PC-9 (cell line): ENCODE measurements at regions of chr1 and their contacts with region 1.

Region 1: GRCh38 chr1:201348211-201348566 is 29.3 kb downstream of the TNNT2 start:
- DNase-seq: peak; percentile 25 to 69
- H3K4me3 ChIP-seq: no peak overlapping the region
- H3K27ac ChIP-seq: no peak overlapping the region
- H3K4me1 ChIP-seq: peaks cover 17% of the 10 kb centered on the region
- H3K27me3 ChIP-seq: no peaks in the 10 kb centered on the region
- CTCF ChIP-seq: peak; percentile 82

Region 2: DNA sequence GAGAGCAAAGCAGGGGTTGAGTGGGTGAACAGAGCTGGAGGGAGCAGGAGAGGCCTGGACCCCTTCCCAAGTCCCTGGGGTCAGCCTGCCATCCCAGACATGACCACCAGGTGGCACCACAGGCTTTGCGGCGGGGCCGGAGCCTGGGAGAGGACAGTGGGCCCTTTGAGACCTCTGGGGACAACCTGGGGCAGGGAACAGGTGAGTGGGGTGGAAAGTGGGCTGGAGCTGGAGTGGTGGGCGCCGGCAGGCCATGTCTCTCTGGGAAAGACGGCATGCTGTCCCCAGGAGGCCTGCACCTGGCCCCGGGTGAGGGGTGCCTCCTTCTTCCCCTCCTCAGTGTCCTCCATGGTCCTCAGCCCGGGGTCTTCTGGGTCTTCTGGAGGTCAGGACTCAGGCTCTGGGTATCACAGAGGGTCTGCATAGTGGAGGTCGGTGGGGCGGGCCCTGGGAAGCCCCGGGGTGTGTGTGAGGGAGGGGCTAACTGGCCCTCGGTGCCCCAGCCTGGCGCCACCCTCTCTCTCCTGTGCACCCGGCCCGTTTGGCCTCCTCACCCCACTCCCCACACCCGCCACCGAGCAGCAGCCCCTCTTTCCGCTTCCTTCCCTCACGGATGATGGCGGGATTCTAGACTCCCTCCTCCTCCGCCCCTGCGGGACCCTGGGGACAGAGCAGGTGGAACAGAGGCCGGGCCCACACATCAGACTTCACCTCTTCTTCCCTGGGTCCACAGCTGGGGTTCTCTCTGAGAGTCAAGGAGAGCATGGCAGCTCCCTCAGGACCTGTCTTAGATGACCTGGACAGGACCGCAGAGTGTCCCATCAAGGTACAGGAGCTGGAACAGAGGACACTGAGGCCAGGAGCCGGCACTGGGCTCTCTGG is 93.3 kb before region 1 on chr1:
- CTCF ChIA-PET with region 1: interaction called, 18 read pairs
- POLR2A ChIA-PET with region 1: no interaction called
- intact Hi-C with region 1: loop called (anchors 1 kb)
- DNase-seq: peak in 1 of 2 experiments; percentile 77
- H3K4me3 ChIP-seq: no peak overlapping the region
- H3K27ac ChIP-seq: no peak overlapping the region
- H3K4me1 ChIP-seq: peaks cover 8% of the 10 kb centered on the region; the same call in 1 of the 2 replicates
- H3K27me3 ChIP-seq: no peaks in the 10 kb centered on the region
- CTCF ChIP-seq: peak; percentile 99

Region 3: GRCh38 chr1:201288766-201289165 is 59.4 kb before region 1 on chr1:
- CTCF ChIA-PET with region 1: interaction called, 13 read pairs
- POLR2A ChIA-PET with region 1: interaction called, 10 read pairs
- intact Hi-C with region 1: no loop called
- DNase-seq: no peak
- H3K4me3 ChIP-seq: no peak overlapping the region
- H3K27ac ChIP-seq: no peak overlapping the region
- H3K4me1 ChIP-seq: peaks cover 37% of the 10 kb centered on the region
- H3K27me3 ChIP-seq: no peaks in the 10 kb centered on the region
- CTCF ChIP-seq: no peak

Region 4: DNA sequence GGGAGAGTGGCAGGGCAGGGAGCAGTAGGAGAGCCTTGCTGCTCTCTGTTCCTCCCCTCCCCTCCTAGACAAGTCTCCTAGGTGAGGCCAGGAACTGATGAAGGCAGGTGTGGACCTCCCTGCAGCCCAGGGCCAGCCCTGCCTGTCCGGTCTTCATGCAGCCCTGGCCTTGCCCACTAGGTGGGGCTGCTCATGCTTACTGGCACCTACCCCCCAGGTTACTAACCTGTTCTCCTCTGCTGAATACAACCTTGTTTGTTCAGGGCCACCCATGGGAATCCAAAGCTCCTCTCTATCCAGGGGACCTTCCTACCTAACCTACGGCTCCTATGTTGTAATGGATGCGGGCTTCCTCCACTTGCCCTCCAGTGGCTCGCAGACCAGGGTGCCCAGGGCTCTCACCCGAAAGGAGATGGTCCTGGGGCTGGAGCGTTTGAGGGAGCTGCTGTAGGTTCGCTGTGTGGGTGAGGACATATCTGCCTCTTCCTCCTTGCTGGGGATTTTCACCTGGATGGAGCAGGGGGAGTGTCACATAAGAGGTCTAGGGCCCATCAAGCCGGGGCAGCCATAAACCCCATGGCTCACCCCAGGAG is 37.2 kb after region 1 on chr1:
- CTCF ChIA-PET with region 1: no interaction called
- POLR2A ChIA-PET with region 1: no interaction called
- intact Hi-C with region 1: loop called (anchors 1 kb)
- DNase-seq: peak; percentile 62 to 82
- H3K4me3 ChIP-seq: no peak overlapping the region
- H3K27ac ChIP-seq: no peak overlapping the region
- H3K4me1 ChIP-seq: peaks cover 14% of the 10 kb centered on the region; the same call in 1 of the 2 replicates
- H3K27me3 ChIP-seq: no peaks in the 10 kb centered on the region
- CTCF ChIP-seq: peak; percentile 87

Region 5: GRCh38 chr1:201481761-201482493 is 133.7 kb after region 1 on chr1:
- CTCF ChIA-PET with region 1: interaction called, 7 read pairs
- POLR2A ChIA-PET with region 1: no interaction called
- intact Hi-C with region 1: loop called (anchors 1 kb)
- DNase-seq: peak; percentile 52 to 86
- H3K4me3 ChIP-seq: no peak overlapping the region
- H3K27ac ChIP-seq: no peak overlapping the region
- H3K4me1 ChIP-seq: peaks cover 30% of the 10 kb centered on the region
- H3K27me3 ChIP-seq: no peaks in the 10 kb centered on the region
- CTCF ChIP-seq: peak; percentile 86

Region 6: DNA sequence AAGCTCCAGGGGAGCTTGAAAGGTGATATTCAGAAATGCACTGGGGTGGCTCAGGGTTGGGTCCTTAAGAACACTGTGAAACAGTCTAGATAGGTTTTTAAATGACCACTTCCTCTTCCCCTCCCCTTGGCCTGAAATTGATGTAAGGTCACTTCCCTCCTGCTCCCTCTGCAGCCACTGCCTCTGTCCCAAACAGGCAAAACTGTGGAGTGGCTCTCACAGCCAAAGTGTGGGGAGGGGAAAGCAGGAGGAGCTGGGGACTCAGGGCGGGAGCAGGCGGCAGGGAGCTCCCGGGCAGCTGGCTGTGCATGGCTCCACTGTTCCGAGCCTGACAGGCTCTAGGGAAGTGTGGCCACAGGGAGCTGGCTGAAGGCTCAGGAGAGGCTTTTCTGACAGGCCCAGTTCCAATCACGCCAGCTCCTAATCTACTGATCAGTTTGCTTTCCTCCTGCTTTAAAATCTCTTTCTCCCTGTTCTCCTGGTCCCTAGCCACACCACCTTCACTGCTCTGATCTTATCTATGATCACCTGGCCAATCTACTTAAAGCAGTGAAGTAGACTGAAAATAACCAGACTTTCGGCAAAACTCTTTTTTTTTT is 163.9 kb after region 1 on chr1:
- CTCF ChIA-PET with region 1: no interaction called
- POLR2A ChIA-PET with region 1: no interaction called
- intact Hi-C with region 1: loop called (anchors 2 kb)
- DNase-seq: peak in 1 of 2 experiments; percentile 24
- H3K4me3 ChIP-seq: no peak overlapping the region
- H3K27ac ChIP-seq: no peak overlapping the region
- H3K4me1 ChIP-seq: peaks cover 48% of the 10 kb centered on the region
- H3K27me3 ChIP-seq: no peaks in the 10 kb centered on the region
- CTCF ChIP-seq: no peak